ENCODE measurements at regions of chr6 and their contacts with region 1.

Region 1: DNA sequence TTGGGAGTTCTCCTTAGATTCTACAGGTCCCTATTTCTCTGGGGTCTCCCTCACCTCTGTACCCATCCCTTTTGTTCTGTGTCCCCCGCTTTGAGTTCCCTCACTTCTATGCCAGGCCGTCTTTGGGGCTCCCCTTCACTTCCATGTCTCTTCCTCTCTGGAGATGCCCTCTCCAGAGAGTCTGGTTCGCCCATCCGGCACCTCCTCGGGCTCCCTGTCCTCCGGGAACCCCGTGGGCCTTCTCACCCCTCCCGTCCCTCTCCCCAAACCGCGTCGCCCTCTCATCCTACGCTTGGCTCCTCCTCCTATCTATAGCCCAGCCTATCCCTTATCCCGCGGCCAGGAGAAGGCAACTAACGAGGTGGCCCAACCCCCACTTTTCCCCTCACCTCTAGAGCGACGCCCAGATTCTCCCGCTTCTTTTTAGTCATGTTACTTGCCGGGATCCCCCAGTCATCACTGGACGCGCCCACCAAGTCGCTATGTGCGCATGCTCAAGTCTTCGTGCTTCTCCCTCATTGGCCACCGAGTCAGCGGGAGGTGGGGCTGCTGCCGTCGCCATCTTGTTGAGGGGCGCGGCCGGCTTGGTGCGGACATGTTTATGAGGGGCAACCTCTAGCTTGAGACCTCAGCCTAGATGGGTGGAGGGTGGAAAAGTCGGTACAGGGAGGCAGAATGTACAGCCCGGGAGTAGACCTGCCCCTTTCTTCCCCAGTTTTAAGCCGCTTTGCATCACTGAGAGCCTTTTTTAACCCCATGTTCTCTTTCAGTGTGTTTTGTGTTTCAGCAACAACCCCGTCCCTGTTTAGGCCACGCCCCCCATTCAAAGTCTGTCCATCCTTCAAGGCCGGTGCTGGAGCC is at the start of gene CCDC167:
- DNase-seq: peak; percentile 99
- ATAC-seq: peak; percentile 82
- H3K4me3 Mint-ChIP-seq: peak within 1 kb of the TSS; percentile 88
- H3K27ac Mint-ChIP-seq: peak within 1 kb of the TSS; percentile 96
- H3K4me1 Mint-ChIP-seq: peaks cover 89% of the 10 kb centered on the region
- H3K27me3 Mint-ChIP-seq: no peaks in the 10 kb centered on the region
- total RNA-seq, gene CCDC167: 55.3 to 60.3 TPM

Region 2: DNA sequence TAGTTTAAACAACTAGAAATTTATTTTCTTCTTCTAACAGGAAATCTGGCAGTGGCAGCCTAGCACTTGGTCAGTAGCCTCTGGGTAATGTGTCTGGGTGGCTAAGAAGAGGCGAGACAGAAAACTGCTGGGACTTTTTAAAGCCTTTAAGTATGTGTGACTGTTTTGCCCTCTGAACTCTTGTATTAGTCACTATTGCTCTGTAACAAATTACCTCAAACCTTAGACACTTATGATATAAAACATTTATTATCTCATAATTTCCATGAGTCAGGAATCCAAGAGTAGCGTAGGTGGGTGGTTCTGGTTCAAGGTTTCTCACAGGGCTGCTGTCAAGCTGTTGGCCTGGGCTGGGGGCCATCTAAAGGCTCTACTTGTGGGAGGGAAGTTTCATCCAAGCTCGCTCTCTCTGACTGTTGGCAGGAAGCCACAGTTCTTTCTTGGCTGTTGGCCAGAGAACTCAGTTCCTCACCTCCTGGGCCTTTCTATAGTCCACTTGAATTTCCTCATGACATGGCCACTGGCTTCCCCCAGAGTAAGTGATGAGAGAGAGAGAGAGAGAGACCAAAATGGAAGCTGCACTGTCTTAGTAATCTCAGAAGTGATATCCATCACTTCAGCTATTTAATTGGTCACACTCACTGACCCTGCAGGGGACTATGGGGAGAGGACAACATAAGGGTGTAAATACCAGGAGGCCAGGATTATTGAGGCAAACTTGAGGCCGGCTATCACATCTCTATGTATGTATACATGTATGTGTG is 259.5 kb before region 1 on chr6:
- CTCF ChIA-PET with region 1: no interaction called
- POLR2A ChIA-PET with region 1: no interaction called
- intact Hi-C with region 1: loop called in 1 of 2 experiments (anchors 1 kb)
- DNase-seq: peak; percentile 90
- ATAC-seq: peak; percentile 92
- H3K4me3 Mint-ChIP-seq: peak overlapping the region; percentile 19
- H3K27ac Mint-ChIP-seq: peak overlapping the region; percentile 84
- H3K4me1 Mint-ChIP-seq: peaks cover 46% of the 10 kb centered on the region
- H3K27me3 Mint-ChIP-seq: no peaks in the 10 kb centered on the region

Region 3: GRCh38 chr6:37438930-37439329 is 60.7 kb before region 1 on chr6:
- CTCF ChIA-PET with region 1: interaction called, 5 read pairs
- POLR2A ChIA-PET with region 1: interaction called, 14 read pairs
- intact Hi-C with region 1: no loop called
- DNase-seq: no peak
- ATAC-seq: no peak
- H3K4me3 Mint-ChIP-seq: no peak overlapping the region
- H3K27ac Mint-ChIP-seq: no peak overlapping the region
- H3K4me1 Mint-ChIP-seq: peaks cover 48% of the 10 kb centered on the region
- H3K27me3 Mint-ChIP-seq: no peaks in the 10 kb centered on the region

Region 4: GRCh38 chr6:37566111-37566949 is 66.7 kb after region 1 on chr6:
- CTCF ChIA-PET with region 1: interaction called, 12 read pairs
- POLR2A ChIA-PET with region 1: interaction called, 3 read pairs
- intact Hi-C with region 1: no loop called
- DNase-seq: peak; percentile 84
- ATAC-seq: peak; percentile 93
- H3K4me3 Mint-ChIP-seq: no peak overlapping the region
- H3K27ac Mint-ChIP-seq: no peak overlapping the region
- H3K4me1 Mint-ChIP-seq: peaks cover 11% of the 10 kb centered on the region
- H3K27me3 Mint-ChIP-seq: peaks cover 4% of the 10 kb centered on the region

Region 5: DNA sequence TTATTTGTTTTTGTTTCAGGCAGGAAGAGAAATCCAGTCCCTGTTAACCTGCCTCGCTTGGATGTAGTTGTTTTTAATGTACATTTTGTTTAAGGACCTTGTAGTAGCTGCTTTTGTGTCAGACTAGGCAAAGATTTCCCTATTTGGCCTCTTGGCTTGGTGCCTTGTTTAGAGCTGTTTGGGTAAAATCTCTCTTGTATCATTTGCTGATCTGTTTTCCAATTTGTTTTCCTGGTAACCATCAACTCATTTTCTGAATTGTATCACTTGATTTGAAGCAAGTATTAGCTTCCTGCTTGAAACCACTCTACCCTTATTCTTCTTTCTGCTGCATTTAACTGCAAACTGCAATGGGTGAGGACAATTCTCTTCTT is 480.5 kb after region 1 on chr6:
- CTCF ChIA-PET with region 1: no interaction called
- POLR2A ChIA-PET with region 1: no interaction called
- intact Hi-C with region 1: loop called in 1 of 2 experiments (anchors 5 kb)
- DNase-seq: no peak
- ATAC-seq: no peak
- H3K4me3 Mint-ChIP-seq: no peak overlapping the region
- H3K27ac Mint-ChIP-seq: no peak overlapping the region
- H3K4me1 Mint-ChIP-seq: peaks cover 61% of the 10 kb centered on the region
- H3K27me3 Mint-ChIP-seq: no peaks in the 10 kb centered on the region